Transverse colon (tissue), 4 donors: ENCODE measurements at regions of chr18 and their contacts with region 1.

Region 1: DNA sequence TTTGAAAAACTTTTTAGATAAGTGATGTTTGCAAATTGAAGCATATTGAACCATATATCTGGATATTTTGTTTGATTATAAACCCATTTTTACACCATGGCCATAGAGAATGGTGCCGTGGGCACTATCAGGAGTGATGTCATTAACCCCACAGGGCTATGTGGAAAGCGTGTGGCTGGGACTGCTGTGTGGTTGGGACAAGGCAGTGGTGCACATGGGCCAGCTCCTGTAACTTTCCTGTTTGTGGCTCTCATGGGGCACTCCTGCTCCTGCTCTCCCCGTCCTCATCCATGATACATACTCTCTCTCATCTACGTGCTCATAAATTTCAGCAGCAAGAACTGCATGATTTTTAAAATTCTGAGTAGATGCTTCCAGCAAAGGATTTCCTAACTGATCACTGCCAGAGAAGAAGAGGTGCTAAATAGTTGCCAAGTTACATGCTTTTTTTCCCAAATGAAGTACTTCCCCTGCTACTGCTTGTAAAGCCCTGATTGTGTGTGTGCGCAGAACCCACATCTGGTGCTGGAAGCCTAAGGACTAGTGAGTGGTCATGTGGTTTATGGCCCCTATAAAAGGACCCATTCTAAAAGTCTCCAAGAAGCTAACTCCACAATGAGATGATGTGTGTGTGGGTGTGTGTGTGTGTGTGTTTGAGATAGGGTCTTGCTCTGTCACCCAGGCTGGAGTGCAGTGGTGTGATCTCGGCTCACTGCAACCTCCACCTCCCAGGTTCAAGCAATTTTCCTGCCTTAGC is 240.8 kb downstream of the NEDD4L start:
- DNase-seq: no peak
- H3K4me3 ChIP-seq: no peak overlapping the region
- H3K27ac ChIP-seq: peak overlapping the region; percentile 78 to 86 (median 82)
- H3K4me1 ChIP-seq: peaks cover 21 to 69% (median 43%) of the 10 kb centered on the region in 4 donors
- H3K27me3 ChIP-seq: no peaks in the 10 kb centered on the region
- CTCF ChIP-seq: no peak
- EP300 ChIP-seq: no peak
- POLR2A ChIP-seq: no peak

Region 2: GRCh38 chr18:58223717-58224424 is 61.0 kb before region 1 on chr18:
- in situ Hi-C with region 1: no loop called
- intact Hi-C with region 1: no loop called
- DNase-seq: peak; percentile 66
- H3K4me3 ChIP-seq: peak overlapping the region in 1 of 4 donors; percentile 43
- H3K27ac ChIP-seq: peak overlapping the region; percentile 82 to 84 (median 84)
- H3K4me1 ChIP-seq: peaks cover 0 to 44% (median 29%) of the 10 kb centered on the region in 4 donors
- H3K27me3 ChIP-seq: no peaks in the 10 kb centered on the region
- CTCF ChIP-seq: no peak
- EP300 ChIP-seq: no peak
- POLR2A ChIP-seq: peak; percentile 69

Region 3: DNA sequence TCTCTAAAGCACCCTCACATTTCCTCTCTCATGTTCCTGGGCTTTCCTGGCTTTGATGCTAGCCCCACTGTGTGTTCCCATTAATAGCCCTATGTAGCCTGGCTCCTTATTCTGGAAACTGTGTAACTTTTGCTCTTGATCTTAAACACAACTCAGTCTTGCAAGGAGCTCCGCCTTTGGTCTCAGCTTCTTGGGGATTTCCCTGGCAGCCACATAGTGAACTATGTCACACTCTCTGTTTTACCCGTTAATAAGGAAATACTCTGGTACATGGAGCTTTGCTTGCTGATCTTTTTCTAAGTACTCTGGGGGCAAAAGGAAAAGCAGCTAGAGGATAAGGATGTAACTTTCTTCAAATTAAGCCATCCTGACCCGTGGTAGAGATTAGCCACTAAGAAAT is 18.5 kb after region 1 on chr18:
- in situ Hi-C with region 1: no loop called
- intact Hi-C with region 1: no loop called
- DNase-seq: no peak
- H3K4me3 ChIP-seq: no peak overlapping the region
- H3K27ac ChIP-seq: no peak overlapping the region
- H3K4me1 ChIP-seq: peaks cover 0 to 21% (median 4%) of the 10 kb centered on the region in 4 donors
- H3K27me3 ChIP-seq: no peaks in the 10 kb centered on the region
- CTCF ChIP-seq: no peak
- EP300 ChIP-seq: no peak
- POLR2A ChIP-seq: no peak

Region 4: GRCh38 chr18:58315739-58316215 is 30.9 kb after region 1 on chr18:
- in situ Hi-C with region 1: no loop called
- intact Hi-C with region 1: loop called (anchors 1 kb)
- DNase-seq: peak; percentile 61
- H3K4me3 ChIP-seq: no peak overlapping the region
- H3K27ac ChIP-seq: peak overlapping the region; percentile 57 to 79 (median 68)
- H3K4me1 ChIP-seq: peaks cover 43 to 66% (median 49%) of the 10 kb centered on the region in 4 donors
- H3K27me3 ChIP-seq: no peaks in the 10 kb centered on the region
- CTCF ChIP-seq: no peak
- EP300 ChIP-seq: peak; percentile 19
- POLR2A ChIP-seq: no peak